Colonic mucosa (tissue), 4 donors: ENCODE measurements at regions of chr6 and their contacts with region 1.

Region 1: GRCh38 chr6:31597006-31597405 is 4.2 kb upstream of the NCR3 start:
- DNase-seq: no peak
- H3K4me3 ChIP-seq: no peak overlapping the region
- H3K27ac ChIP-seq: no peak overlapping the region
- H3K4me1 ChIP-seq: no peaks in the 10 kb centered on the region
- H3K27me3 ChIP-seq: no peaks in the 10 kb centered on the region
- CTCF ChIP-seq: no peak

Region 2: GRCh38 chr6:31546962-31547726 is 49.9 kb before region 1 on chr6 and contains the start of gene NFKBIL1:
- intact Hi-C with region 1: loop called (anchors 2 kb)
- DNase-seq: peak; percentile 95
- H3K4me3 ChIP-seq: peak within 1 kb of the TSS; percentile 35
- H3K27ac ChIP-seq: peak within 1 kb of the TSS; percentile 52
- H3K4me1 ChIP-seq: peaks cover 8% of the 10 kb centered on the region
- H3K27me3 ChIP-seq: no peaks in the 10 kb centered on the region
- CTCF ChIP-seq: no peak
- total RNA-seq, gene NFKBIL1: 16.1 to 18.8 TPM

Region 3: GRCh38 chr6:31665501-31666336 is 68.7 kb after region 1 on chr6 and contains the start of gene CSNK2B:
- intact Hi-C with region 1: no loop called
- DNase-seq: peak; percentile 98
- H3K4me3 ChIP-seq: peak within 1 kb of the TSS; percentile 87
- H3K27ac ChIP-seq: peak within 1 kb of the TSS; percentile 91
- H3K4me1 ChIP-seq: peaks cover 20% of the 10 kb centered on the region
- H3K27me3 ChIP-seq: no peaks in the 10 kb centered on the region
- CTCF ChIP-seq: peak; percentile 17
- total RNA-seq, gene CSNK2B: 140 to 152 TPM